Kidney (tissue), 22 donors: ENCODE measurements at regions of chr4 and their contacts with region 1.

Region 1: DNA sequence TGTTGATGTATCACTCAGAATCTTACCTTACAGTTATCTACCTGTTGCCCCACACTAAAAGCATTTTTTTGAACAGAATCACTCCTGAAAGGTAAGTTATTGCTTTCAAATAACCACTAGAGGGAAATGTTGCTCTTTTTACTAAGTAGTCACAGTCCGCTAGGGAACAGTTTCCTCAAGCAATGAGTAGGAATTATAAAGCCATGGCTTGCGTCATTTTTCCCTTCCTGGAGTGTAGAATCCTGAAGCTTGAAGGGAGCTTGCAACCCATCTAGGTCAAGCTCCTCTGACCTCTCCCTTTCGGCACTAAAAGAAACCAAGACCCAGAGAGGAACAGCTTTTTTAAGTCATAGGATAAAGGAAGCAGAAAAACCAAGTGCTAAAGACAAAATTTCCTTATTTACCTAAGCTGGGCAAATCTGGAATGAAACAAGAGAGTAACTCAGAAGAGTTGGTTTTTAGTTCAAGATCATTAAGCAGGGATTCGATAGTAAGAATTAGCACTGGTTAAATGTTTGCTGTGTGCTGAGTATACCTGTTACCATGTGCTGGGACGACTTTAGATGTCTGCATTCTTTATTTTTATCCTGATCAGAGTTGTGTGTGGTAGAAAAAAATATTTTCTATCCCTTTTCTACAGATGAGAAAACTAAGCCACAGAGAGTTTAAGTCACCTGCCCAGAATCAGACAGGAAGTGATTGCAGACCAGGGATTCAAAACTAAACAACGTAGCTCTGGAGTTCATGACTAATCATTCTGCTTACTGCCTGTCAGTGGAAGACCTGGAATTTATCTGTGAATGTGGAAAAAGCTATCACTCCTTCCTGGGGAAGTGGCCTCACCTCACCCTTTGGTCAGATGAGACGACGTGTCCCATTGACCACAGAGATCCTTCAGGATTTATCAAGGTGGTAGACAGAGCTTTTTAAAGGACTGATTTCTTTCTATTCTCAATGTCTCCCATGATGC is 631.5 kb downstream of the RAB28 start:
- DNase-seq: peak in 3 of 5 donors; percentile 24 to 90 (median 87)
- H3K4me3 ChIP-seq: peak overlapping the region in 1 of 3 donors; percentile 19
- H3K27ac ChIP-seq: no peak overlapping the region
- H3K4me1 ChIP-seq: peaks cover 0 to 4% (median 0%) of the 10 kb centered on the region in 3 donors
- H3K27me3 ChIP-seq: no peaks in the 10 kb centered on the region
- CTCF ChIP-seq: peak; percentile 53

Region 2: DNA sequence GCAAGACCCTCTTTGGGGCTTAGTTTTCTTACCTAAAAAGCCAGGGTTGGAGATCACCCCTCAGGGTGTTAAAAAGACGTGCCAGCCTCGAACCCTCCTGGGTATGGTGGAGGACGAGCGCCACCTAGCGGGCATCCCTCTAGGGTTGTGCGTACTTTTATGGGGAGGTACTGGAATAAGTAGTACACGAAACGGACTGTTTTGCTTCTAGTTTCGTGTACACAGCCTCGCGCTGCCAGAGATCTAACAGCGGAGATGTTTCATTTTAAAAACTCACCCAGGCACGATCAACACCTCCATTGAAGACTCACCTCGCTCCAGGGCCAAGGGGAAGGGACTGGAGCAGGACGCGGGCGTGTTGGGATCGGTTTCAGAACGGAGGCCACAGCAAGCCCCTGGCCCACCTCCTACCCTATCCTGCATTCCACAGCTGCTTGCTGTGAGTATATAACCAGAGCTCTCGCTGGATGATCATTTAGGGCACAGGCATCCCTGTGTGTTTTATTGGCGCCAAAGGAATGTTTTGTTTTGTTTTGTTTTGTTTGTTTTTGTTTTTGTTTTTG is 696.4 kb after region 1 on chr4:
- intact Hi-C with region 1: loop called (anchors 10 kb)
- DNase-seq: peak; percentile 89 to 91 (median 90)
- H3K4me3 ChIP-seq: peak overlapping the region; percentile 48 to 64 (median 51)
- H3K27ac ChIP-seq: no peak overlapping the region
- H3K4me1 ChIP-seq: peaks cover 2 to 10% (median 6%) of the 10 kb centered on the region in 3 donors
- H3K27me3 ChIP-seq: peaks cover 35% of the 10 kb centered on the region
- CTCF ChIP-seq: peak; percentile 80